K562 (cell line): ENCODE measurements at regions of chr11 and their contacts with region 1.

Region 1: GRCh38 chr11:45771566-45772448 is 33.1 kb upstream of the SLC35C1 start:
- DNase-seq: peak; percentile 84 to 95 (median 94)
- ATAC-seq: peak; percentile 97
- H3K4me3 ChIP-seq: peak overlapping the region; percentile 22
- H3K27ac ChIP-seq: no peak overlapping the region
- H3K4me1 ChIP-seq: peaks cover 5 to 12% of the 10 kb centered on the region in 2 experiments; a peak in 3 of 5 replicates
- H3K27me3 ChIP-seq: peaks cover 14 to 56% of the 10 kb centered on the region in 2 experiments
- CTCF ChIP-seq: peak; percentile 92 to 93 (median 92)
- EP300 ChIP-seq: no peak
- POLR2A ChIP-seq: no peak
- RAD21 ChIP-seq: peak; percentile 88 to 90

Region 2: DNA sequence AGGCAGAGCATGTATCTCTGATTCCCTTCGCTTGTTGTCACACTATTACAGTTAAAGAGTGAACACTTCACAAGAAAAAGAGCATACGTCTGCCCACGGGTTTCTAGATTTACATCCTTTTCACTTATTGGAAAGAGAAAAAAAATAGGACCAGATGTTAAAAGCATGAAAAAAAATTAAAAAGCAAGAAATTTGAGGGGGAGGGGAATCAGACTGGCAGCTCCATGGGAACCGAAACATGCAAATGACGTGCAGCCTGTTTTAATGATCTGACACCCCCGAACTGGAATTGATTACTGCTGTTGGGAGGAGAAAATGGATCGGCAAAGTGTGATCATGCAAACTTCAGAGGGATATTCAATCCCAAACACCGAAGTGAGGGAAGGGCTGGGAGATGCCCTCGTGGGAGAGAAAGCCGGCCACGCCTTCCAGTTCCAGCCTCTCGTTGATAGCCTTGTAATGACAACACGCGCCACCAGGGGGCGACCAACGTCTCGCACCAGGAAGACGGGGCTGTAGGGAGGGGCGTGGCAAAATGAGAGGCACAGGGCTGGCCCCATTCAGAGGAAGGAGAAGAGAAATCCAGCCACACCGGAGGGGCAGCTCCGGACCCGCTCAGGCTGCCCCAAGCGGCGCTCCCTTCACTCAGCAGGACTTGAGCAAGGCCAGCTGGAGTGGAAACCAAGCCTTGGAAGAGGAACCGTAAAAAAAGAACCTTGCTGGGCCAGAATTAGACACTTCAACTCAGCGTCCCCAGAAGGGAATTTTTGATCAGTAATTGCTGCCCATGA is 431.9 kb before region 1 on chr11:
- CTCF ChIA-PET with region 1: no interaction called
- POLR2A ChIA-PET with region 1: no interaction called
- in situ Hi-C with region 1: no loop called
- intact Hi-C with region 1: loop called (anchors 1 kb)
- DNase-seq: peak; percentile 92 to 96 (median 94)
- ATAC-seq: peak; percentile 100
- H3K4me3 ChIP-seq: no peak overlapping the region
- H3K27ac ChIP-seq: no peak overlapping the region
- H3K4me1 ChIP-seq: peaks cover 0 to 5% of the 10 kb centered on the region in 2 experiments; a peak in 2 of 5 replicates
- H3K27me3 ChIP-seq: peaks cover 3 to 18% of the 10 kb centered on the region in 2 experiments; a peak in 4 of 5 replicates
- CTCF ChIP-seq: peak; percentile 86 to 92 (median 90)
- EP300 ChIP-seq: no peak
- POLR2A ChIP-seq: no peak
- RAD21 ChIP-seq: peak; percentile 48 to 64; a peak in 3 of 4 replicates

Region 3: GRCh38 chr11:45371251-45372115 is 400.3 kb before region 1 on chr11:
- CTCF ChIA-PET with region 1: interaction called, 14 read pairs
- POLR2A ChIA-PET with region 1: interaction called, 3 read pairs
- in situ Hi-C with region 1: loop called (anchors 10 kb)
- intact Hi-C with region 1: loop called (anchors 1 kb)
- DNase-seq: peak; percentile 68 to 79 (median 77)
- ATAC-seq: peak; percentile 94
- H3K4me3 ChIP-seq: no peak overlapping the region
- H3K27ac ChIP-seq: no peak overlapping the region
- H3K4me1 ChIP-seq: peaks cover 0 to 2% of the 10 kb centered on the region in 2 experiments; a peak in 1 of 5 replicates
- H3K27me3 ChIP-seq: peaks cover 14 to 40% of the 10 kb centered on the region in 2 experiments
- CTCF ChIP-seq: peak; percentile 85 to 94 (median 91)
- EP300 ChIP-seq: no peak
- POLR2A ChIP-seq: no peak
- RAD21 ChIP-seq: peak; percentile 68 to 79

Region 4: DNA sequence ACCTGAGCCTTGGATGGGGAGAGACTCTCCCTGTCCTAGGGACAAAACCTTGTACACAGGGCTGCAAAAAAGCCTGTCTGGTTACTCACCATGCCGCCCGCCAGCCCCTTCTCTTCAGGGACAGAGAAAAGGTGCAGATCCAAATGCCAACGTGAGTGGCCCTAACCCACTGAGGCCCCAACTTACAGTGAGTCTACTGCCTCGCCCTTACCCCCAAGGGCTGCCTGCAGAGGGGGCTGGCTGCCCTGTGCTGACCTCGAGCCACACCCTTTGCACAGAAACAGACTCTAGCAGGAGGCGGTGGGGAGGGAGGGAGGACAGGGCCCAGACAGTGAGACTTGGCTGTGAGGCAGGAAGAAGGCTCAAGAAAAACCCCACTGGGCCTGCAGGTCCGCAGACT is 92.8 kb before region 1 on chr11:
- CTCF ChIA-PET with region 1: no interaction called
- POLR2A ChIA-PET with region 1: interaction called, 3 read pairs
- in situ Hi-C with region 1: no loop called
- intact Hi-C with region 1: loop called (anchors 1 kb)
- DNase-seq: peak in 1 of 4 experiments; percentile 16
- ATAC-seq: peak; percentile 79
- H3K4me3 ChIP-seq: no peak overlapping the region
- H3K27ac ChIP-seq: no peak overlapping the region
- H3K4me1 ChIP-seq: no peaks in the 10 kb centered on the region
- H3K27me3 ChIP-seq: peaks cover 4 to 38% of the 10 kb centered on the region in 2 experiments; a peak in 2 of 5 replicates
- CTCF ChIP-seq: peak in 2 of 3 experiments; percentile 23 to 37; a peak in 2 of 6 replicates
- EP300 ChIP-seq: no peak
- POLR2A ChIP-seq: no peak
- RAD21 ChIP-seq: peak in 1 of 2 experiments; percentile 26; a peak in 2 of 4 replicates

Region 5: DNA sequence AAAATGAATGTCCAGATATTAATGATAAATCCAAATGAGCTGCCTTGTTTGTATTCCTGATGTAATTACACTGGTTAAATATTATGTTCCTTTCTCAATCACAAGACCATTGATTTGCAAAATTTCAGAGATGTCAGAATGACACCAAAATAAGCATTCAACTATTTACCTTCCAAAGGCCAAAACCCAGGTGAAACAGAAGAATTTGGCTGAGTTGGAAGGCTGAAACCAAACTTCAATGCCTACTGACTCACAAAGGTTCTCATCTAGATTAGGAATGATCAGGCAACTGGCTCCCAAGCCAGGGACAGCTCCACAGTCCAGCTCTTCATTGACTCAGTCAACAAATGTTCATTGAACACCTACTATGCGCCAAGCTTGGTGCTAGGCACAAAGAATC is 19.7 kb after region 1 on chr11:
- CTCF ChIA-PET with region 1: no interaction called
- POLR2A ChIA-PET with region 1: no interaction called
- in situ Hi-C with region 1: no loop called
- intact Hi-C with region 1: no loop called
- DNase-seq: no peak
- ATAC-seq: no peak
- H3K4me3 ChIP-seq: no peak overlapping the region
- H3K27ac ChIP-seq: no peak overlapping the region
- H3K4me1 ChIP-seq: no peaks in the 10 kb centered on the region; a peak in 1 of 5 replicates
- H3K27me3 ChIP-seq: peaks cover 13 to 17% of the 10 kb centered on the region in 2 experiments; a peak in 4 of 5 replicates
- CTCF ChIP-seq: no peak
- EP300 ChIP-seq: no peak
- POLR2A ChIP-seq: no peak
- RAD21 ChIP-seq: no peak

Region 6: DNA sequence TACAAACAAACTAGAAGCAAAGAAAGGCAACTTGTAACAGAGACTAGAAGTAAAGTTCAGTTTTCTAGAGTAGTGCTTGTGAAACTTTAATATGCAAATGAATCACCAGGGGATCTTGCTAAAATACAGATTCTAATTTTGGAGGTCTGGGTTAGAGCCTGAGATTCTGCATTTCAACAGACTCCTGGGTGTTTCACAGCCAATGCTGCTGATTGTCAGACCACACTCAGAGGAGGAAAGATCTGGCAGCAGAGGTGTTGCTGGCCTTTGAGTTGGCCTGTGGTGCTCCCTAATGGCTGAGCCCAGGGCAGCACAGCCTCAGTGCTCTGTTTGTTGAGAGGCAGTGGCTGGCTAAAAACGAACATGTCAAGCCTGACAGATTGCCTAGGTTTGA is 80.9 kb after region 1 on chr11:
- CTCF ChIA-PET with region 1: interaction called, 8 read pairs
- POLR2A ChIA-PET with region 1: no interaction called
- in situ Hi-C with region 1: no loop called
- intact Hi-C with region 1: loop called (anchors 5 kb)
- DNase-seq: peak in 2 of 4 experiments; percentile 40 to 44
- ATAC-seq: peak; percentile 66
- H3K4me3 ChIP-seq: no peak overlapping the region
- H3K27ac ChIP-seq: no peak overlapping the region
- H3K4me1 ChIP-seq: peaks cover 6 to 9% of the 10 kb centered on the region in 2 experiments
- H3K27me3 ChIP-seq: no peaks in the 10 kb centered on the region
- CTCF ChIP-seq: peak; percentile 41 to 48 (median 45); a peak in 4 of 6 replicates
- EP300 ChIP-seq: no peak
- POLR2A ChIP-seq: no peak
- RAD21 ChIP-seq: peak; percentile 38 to 63